H1 (cell line): ENCODE measurements at regions of chr1 and their contacts with region 1.

Region 1: DNA sequence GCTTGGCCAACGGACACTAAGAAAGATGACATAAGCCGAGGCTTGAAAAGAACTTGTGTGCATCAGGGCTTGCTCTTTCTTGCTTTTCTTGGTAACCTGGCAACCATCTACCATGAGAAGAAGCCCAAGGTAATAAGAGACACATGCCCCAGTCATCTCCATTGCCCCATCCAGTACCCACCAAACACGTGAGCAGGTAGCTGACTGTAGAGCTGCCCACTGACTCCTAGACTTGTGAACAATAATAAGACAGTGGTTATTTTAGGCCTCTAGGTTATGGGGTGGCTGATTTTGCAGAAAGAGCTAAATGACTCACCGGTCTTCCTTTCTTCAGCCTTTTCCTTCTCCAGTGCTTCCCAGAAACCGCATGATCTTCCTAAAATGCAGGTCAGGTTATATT is 105.0 kb upstream of the JUN start:
- DNase-seq: no peak
- H3K4me3 ChIP-seq: no peak overlapping the region
- H3K27ac ChIP-seq: no peak overlapping the region
- H3K4me1 ChIP-seq: no peaks in the 10 kb centered on the region
- H3K27me3 ChIP-seq: no peaks in the 10 kb centered on the region
- CTCF ChIP-seq: no peak
- EP300 ChIP-seq: no peak
- POLR2A ChIP-seq: no peak
- RAD21 ChIP-seq: no peak

Region 2: GRCh38 chr1:58898739-58899586 is 10.1 kb after region 1 on chr1:
- CTCF ChIA-PET with region 1: interaction called, 21 read pairs
- POLR2A ChIA-PET with region 1: interaction called, 4 read pairs
- DNase-seq: no peak
- H3K4me3 ChIP-seq: no peak overlapping the region
- H3K27ac ChIP-seq: no peak overlapping the region
- H3K4me1 ChIP-seq: peaks cover 0 to 7% (median 2%) of the 10 kb centered on the region in 4 experiments; a peak in 2 of 7 replicates
- H3K27me3 ChIP-seq: peaks cover 0 to 4% (median 0%) of the 10 kb centered on the region in 4 experiments; a peak in 2 of 7 replicates
- CTCF ChIP-seq: no peak
- EP300 ChIP-seq: no peak
- POLR2A ChIP-seq: no peak
- RAD21 ChIP-seq: no peak